ENCODE measurements at regions of chr1 and their contacts with region 1.

Region 1: GRCh38 chr1:151098126-151098525 is 27.6 kb downstream of the GABPB2 start:
- DNase-seq: no peak
- H3K4me3 Mint-ChIP-seq: no peak overlapping the region
- H3K27ac Mint-ChIP-seq: no peak overlapping the region
- H3K4me1 Mint-ChIP-seq: no peaks in the 10 kb centered on the region
- H3K27me3 Mint-ChIP-seq: no peaks in the 10 kb centered on the region

Region 2: DNA sequence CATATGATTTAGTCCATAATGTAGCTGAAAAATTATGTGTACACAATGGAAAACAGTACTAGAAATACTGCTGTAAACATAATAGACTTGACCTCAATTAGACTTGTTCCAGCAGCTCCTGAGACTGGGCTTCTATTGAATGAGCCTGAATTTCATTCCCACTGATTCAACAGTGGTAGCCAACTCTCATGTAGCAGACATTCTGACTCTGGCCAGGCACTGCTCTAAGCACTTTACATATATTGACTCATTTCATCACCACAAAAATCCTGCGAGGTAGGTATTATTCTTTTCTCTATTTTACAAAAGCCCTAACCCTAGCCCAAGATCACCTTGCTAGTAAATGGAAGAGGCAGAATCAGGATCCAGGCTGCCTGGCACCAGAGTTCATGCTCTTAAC is 319.7 kb before region 1 on chr1:
- intact Hi-C with region 1: no loop called
- DNase-seq: no peak
- H3K4me3 Mint-ChIP-seq: no peak overlapping the region
- H3K27ac Mint-ChIP-seq: no peak overlapping the region
- H3K4me1 Mint-ChIP-seq: peaks cover 13% of the 10 kb centered on the region
- H3K27me3 Mint-ChIP-seq: no peaks in the 10 kb centered on the region

Region 3: DNA sequence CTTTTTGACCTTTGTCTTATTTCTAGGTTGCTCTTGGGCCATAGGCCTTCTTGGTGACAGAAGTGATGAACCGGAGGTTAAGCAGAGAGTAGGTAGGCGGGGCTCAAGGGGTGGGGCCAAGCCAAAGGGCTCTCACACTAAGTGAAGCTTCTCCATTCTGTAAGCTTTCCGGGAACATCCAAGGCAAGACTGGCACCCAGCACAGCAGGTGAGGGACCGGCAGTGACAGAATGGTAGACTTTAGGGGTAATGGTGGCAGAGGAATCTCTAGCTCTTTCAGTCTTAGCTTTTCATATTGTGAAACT is 58.3 kb after region 1 on chr1 and contains the start of gene TNFAIP8L2:
- intact Hi-C with region 1: loop called (anchors 1 kb)
- DNase-seq: peak; percentile 72
- H3K4me3 Mint-ChIP-seq: peak within 1 kb of the TSS; percentile 92
- H3K27ac Mint-ChIP-seq: peak within 1 kb of the TSS; percentile 99
- H3K4me1 Mint-ChIP-seq: peaks cover 42% of the 10 kb centered on the region
- H3K27me3 Mint-ChIP-seq: no peaks in the 10 kb centered on the region
- total RNA-seq, gene TNFAIP8L2: 38.0 and 38.5 TPM in 2 replicates

Region 4: GRCh38 chr1:151639466-151639865 is 541.3 kb after region 1 on chr1:
- intact Hi-C with region 1: no loop called
- DNase-seq: no peak
- H3K4me3 Mint-ChIP-seq: no peak overlapping the region
- H3K27ac Mint-ChIP-seq: no peak overlapping the region
- H3K4me1 Mint-ChIP-seq: no peaks in the 10 kb centered on the region
- H3K27me3 Mint-ChIP-seq: no peaks in the 10 kb centered on the region

Measured in activated T-helper 1 cell treated with anti-CD3 and anti-CD28 coated beads, Interleukin-12 subunit alpha, Interleukin-12 subunit beta, Interleukin-2, Interleukin-4 antibody, amounts not matched to agents 30 ng/mL and 10 ng/mL and 1 ng/mL, durations not matched to agents 14 hours and 24 hours and 36 hours (primary cell).